ENCODE measurements at regions of chr20 and their contacts with region 1.

Region 1: GRCh38 chr20:278607-279571 is 11.7 kb downstream of the C20orf96 start:
- DNase-seq: peak; percentile 43 to 68
- H3K4me3 ChIP-seq: peak overlapping the region in 1 of 2 donors; percentile 17
- H3K27ac ChIP-seq: peak overlapping the region in 1 of 2 donors; percentile 57
- H3K4me1 ChIP-seq: no peaks in the 10 kb centered on the region
- H3K27me3 ChIP-seq: no peaks in the 10 kb centered on the region
- CTCF ChIP-seq: peak in 2 of 4 experiments; percentile 21 to 33
- POLR2A ChIP-seq: no peak

Region 2: DNA sequence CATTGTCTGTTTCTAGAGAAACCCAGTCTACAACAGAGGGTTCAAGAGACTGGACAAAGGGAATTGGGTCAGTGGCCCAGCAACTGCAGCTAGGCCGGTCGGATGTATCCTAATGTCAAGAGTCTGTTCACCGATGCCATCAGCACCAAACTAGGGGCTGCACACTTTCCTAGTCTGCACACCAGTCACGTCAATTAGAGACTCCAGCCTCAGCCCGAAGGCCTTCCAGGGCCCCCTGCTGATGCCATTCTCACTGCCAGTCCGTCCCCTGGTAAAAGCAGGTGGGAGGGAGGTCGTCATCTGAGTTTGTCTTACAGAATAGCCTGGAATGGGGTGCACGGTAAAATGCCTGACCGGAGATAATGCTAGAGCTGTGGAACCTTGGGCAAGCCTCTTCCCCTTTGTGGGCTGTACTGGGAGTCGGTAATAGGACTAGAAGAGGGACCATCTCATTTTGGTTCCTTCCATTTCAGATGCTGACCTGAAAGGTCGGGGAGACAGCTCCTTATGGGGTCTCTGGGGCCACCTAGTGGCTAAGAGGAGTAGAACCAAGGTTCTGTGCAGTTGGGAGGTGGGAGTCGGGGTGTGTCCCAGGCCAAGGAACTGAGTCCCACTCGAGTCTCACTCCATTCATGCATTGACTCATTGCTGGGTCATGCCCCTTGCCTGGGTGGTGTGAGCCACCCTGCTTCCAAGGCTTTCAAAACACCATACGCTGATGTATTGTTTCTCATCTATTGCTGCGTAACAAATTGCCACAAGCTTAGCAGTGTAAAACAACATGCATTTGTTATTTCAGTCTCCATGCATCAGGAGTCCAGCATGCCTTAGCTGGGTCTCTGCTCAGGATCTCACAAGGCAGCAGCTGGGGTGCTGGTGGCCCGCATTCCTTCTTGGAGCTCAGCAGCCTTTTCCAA is 51.6 kb after region 1 on chr20:
- intact Hi-C with region 1: loop called (anchors 10 kb)
- DNase-seq: peak; percentile 52 to 67
- H3K4me3 ChIP-seq: no peak overlapping the region
- H3K27ac ChIP-seq: no peak overlapping the region
- H3K4me1 ChIP-seq: no peaks in the 10 kb centered on the region
- H3K27me3 ChIP-seq: no peaks in the 10 kb centered on the region
- CTCF ChIP-seq: peak; percentile 87 to 92 (median 88)
- POLR2A ChIP-seq: peak in 1 of 2 donors; percentile 16